ENCODE measurements at regions of chr14 and their contacts with region 1.

Region 1: GRCh38 chr14:58501214-58501816 is 73.8 kb downstream of the KIAA0586 start:
- DNase-seq: peak in 21 of 42 donors; percentile 11 to 74 (median 45)

Region 2: DNA sequence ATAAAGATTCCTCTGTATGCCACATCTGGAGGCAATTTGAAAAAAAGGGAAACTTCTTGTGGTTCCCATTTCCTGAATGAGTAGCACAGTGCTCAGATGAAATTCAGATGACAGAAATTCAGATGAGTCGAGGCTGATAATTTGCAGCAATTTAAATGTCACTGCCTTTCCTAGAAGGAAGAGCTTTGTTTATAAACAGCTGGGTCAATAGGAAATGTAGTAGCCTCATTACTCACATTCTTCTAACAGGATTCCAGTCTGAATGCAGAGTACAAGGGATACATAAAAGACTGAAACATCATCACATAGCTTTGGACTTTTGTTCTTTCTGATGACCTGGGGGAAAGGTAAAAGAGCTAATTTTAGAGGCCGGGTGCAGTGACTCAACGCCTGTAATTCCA is 125.1 kb after region 1 on chr14:
- intact Hi-C with region 1: no loop called
- DNase-seq: no peak

Region 3: GRCh38 chr14:58637391-58638230 is 136.3 kb after region 1 on chr14 and contains the start of gene DACT1:
- intact Hi-C with region 1: loop called (anchors 5 kb)
- DNase-seq: peak; percentile 12 to 86 (median 71)

Region 4: DNA sequence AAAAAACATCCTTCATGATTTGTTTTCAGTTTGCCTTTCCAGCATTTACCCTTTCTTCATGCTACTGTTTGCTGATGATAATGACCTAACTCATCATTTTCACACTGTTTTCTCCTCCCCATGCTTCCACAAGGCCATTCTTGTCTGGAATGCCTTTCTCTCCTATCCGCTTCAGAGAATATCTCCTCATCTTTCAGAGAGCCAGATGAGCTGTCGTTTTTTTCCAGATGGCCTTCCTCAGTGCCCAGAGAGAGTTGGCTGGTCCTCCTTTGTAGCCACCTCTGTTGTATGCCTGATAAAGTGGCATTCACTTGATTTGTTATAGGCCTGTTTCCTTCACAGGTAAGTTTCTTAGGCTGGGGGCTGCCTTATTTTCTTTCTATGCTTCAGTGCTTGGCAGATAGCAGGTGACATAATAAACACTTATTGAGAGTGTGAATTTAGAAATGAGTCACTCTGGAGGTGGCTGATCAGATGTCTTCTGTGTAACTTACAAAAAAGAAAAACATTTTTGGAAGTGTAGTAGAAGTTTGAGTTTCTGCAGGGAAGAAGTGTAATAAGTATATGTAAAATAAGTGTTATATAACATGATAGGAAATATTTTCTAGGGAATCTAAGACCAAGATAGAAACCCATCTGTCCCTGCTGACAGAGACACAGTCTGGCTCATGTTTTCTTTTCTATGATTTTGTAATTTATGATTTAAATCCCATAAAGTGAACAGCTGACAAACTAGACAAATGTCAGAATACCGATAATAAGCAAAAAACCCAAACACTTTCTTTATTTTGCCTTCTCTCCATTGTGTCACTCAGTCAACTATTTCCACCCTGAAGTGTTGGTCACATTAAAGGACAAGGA is 311.0 kb after region 1 on chr14:
- intact Hi-C with region 1: no loop called
- DNase-seq: no peak

Region 5: DNA sequence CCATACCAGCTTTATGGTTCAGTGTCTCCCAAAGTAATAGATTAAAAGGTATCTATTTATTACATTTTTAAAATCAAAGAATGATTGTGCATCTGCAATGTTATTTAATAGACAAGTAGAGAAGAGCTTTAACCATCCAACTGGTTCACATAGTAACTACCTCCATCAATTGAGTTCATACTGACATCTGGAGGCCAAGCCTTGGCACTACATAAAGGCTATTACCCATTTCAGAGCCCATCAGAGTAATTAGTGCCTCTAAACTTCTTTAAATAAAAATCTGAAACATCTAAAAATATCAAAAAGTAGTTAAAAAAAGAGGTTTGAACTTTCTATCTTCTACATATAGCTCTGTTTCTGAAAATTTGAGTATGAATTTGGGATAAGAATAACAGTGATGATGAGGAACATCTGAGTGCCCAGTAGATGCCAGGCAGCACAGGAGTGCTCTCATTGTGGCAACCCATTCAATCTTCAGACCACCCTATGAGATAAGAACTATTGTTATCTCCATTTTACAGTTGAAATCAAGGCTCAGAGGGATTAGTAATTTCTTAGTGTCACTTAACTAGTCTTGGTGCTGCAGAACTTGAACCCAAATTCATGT is 554.2 kb after region 1 on chr14:
- intact Hi-C with region 1: loop called (anchors 5 kb)
- DNase-seq: peak in 29 of 42 donors; percentile 4 to 77 (median 48)

Measured in head of caudate nucleus (tissue), 42 donors.